Tibial artery (tissue), 4 donors: ENCODE measurements at regions of chr7 and their contacts with region 1.

Region 1: GRCh38 chr7:33334349-33334748 is 205.0 kb downstream of the BBS9 start:
- DNase-seq: no peak
- H3K4me3 ChIP-seq: no peak overlapping the region
- H3K27ac ChIP-seq: no peak overlapping the region
- H3K4me1 ChIP-seq: no peaks in the 10 kb centered on the region
- H3K27me3 ChIP-seq: no peaks in the 10 kb centered on the region
- CTCF ChIP-seq: no peak

Region 2: GRCh38 chr7:31763548-31763947 is 1570.8 kb before region 1 on chr7:
- intact Hi-C with region 1: no loop called
- DNase-seq: no peak
- H3K4me3 ChIP-seq: no peak overlapping the region
- H3K27ac ChIP-seq: no peak overlapping the region
- H3K4me1 ChIP-seq: peaks cover 0 to 11% (median 0%) of the 10 kb centered on the region in 4 donors
- H3K27me3 ChIP-seq: no peaks in the 10 kb centered on the region
- CTCF ChIP-seq: no peak

Region 3: DNA sequence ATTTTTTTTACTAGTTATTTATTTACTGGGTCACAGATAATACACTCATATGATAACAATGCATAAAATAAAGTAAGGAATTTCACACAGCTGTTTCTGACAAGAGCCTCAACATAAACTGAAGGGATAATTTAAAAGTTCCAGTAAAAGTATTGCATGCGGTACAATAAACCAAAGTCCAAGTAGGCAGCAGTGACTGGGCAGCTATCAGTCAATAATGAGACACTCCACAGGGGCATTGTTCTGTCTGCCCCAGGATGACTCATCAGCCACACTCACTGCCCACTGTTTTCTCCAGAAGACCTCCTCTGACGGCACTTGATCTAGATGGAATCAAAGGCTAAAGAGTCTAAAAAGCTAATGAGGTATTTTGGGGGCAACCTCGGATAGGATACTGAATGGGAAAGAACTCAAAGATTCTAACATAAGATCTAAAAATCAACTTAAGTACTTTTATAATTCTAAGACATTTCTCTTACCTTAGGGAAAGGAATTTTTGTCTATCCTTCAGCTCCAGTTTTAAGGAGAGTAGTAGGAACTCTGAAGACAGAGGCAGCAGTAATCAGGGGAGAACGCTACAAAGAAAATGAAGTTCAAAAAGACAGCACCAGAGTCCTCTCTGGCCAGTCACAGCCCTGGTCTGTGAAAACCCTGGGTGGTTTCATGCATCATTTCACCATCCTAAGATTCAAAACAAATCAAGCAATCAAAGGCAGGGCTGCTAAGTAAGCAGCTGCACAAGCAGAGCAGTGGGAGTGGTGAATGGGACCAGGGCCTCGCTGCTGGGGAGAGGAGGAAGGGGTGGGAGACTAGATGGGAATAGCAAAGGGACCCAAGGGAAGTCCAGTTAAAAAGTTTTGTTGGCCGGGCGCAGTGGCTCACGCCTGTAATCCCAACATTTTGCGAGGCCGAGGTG is 664.0 kb before region 1 on chr7:
- intact Hi-C with region 1: no loop called
- DNase-seq: no peak
- H3K4me3 ChIP-seq: no peak overlapping the region
- H3K27ac ChIP-seq: no peak overlapping the region
- H3K4me1 ChIP-seq: peaks cover 0 to 10% (median 6%) of the 10 kb centered on the region in 4 donors
- H3K27me3 ChIP-seq: no peaks in the 10 kb centered on the region
- CTCF ChIP-seq: no peak

Region 4: GRCh38 chr7:33287748-33288147 is 46.6 kb before region 1 on chr7:
- intact Hi-C with region 1: loop called (anchors 10 kb)
- DNase-seq: no peak
- H3K4me3 ChIP-seq: no peak overlapping the region
- H3K27ac ChIP-seq: no peak overlapping the region
- H3K4me1 ChIP-seq: peaks cover 0 to 10% (median 0%) of the 10 kb centered on the region in 4 donors
- H3K27me3 ChIP-seq: no peaks in the 10 kb centered on the region
- CTCF ChIP-seq: no peak